CD8-positive, alpha-beta T cell (primary cell): ENCODE measurements at regions of chr11 and their contacts with region 1.

Region 1: GRCh38 chr11:123246749-123247495 is 51.9 kb upstream of the CLMP start:
- DNase-seq: peak; percentile 68 to 88 (median 80)
- ATAC-seq: peak; percentile 86
- H3K4me3 ChIP-seq: no peak overlapping the region
- H3K4me3 Mint-ChIP-seq: peak overlapping the region; percentile 42
- H3K27ac ChIP-seq: no peak overlapping the region
- H3K27ac Mint-ChIP-seq: no peak overlapping the region
- H3K4me1 ChIP-seq: no peaks in the 10 kb centered on the region
- H3K4me1 Mint-ChIP-seq: peaks cover 6% of the 10 kb centered on the region
- H3K27me3 ChIP-seq: no peaks in the 10 kb centered on the region
- H3K27me3 Mint-ChIP-seq: peaks cover 12% of the 10 kb centered on the region
- CTCF ChIP-seq: peak; percentile 94

Region 2: DNA sequence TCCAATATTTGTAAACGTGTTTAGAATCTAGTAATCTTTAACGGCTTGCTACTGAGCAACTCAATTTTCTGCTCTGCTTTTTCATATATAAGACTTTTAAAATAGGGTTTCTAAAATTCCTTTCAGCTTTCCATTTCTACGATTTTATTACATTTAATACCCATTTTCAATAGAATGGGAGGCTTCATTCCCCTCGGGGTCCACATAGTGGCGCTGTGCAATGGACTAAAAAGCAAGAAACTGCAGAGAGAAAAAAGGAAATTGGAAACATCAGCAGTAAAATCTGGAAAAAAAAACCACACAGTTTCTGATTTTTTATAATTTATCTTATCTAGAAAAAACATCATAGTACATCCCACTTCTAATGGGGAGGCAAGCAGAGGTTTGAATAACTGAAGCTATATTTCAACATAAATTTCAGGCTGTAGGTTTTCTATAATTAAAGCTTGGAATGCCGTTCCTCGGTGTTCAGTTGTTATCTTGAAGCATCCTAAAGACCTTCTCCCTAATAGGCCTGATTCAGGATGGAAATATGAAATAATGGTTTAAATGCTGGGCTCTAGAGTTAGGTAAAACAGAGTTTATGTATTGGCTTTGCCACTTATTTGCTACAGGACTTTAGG is 383.1 kb before region 1 on chr11:
- CTCF ChIA-PET with region 1: interaction called, 6 read pairs
- POLR2A ChIA-PET with region 1: no interaction called
- intact Hi-C with region 1: loop called (anchors 1 to 5 kb)
- DNase-seq: peak in 6 of 9 experiments; percentile 10 to 56 (median 38)
- ATAC-seq: no peak
- H3K4me3 ChIP-seq: no peak overlapping the region
- H3K4me3 Mint-ChIP-seq: no peak overlapping the region
- H3K27ac ChIP-seq: no peak overlapping the region
- H3K27ac Mint-ChIP-seq: no peak overlapping the region
- H3K4me1 ChIP-seq: no peaks in the 10 kb centered on the region
- H3K4me1 Mint-ChIP-seq: peaks cover 12% of the 10 kb centered on the region
- H3K27me3 ChIP-seq: no peaks in the 10 kb centered on the region
- H3K27me3 Mint-ChIP-seq: no peaks in the 10 kb centered on the region
- CTCF ChIP-seq: peak; percentile 83

Region 3: GRCh38 chr11:123103326-123103980 is 143.5 kb before region 1 on chr11:
- CTCF ChIA-PET with region 1: interaction called, 121 read pairs
- POLR2A ChIA-PET with region 1: interaction called, 3 read pairs
- intact Hi-C with region 1: loop called in 1 of 2 experiments (anchors 2 kb)
- DNase-seq: peak in 7 of 9 experiments; percentile 16 to 68 (median 38)
- ATAC-seq: peak; percentile 66
- H3K4me3 ChIP-seq: no peak overlapping the region
- H3K4me3 Mint-ChIP-seq: no peak overlapping the region
- H3K27ac ChIP-seq: no peak overlapping the region
- H3K27ac Mint-ChIP-seq: no peak overlapping the region
- H3K4me1 ChIP-seq: peaks cover 14% of the 10 kb centered on the region
- H3K4me1 Mint-ChIP-seq: peaks cover 27% of the 10 kb centered on the region
- H3K27me3 ChIP-seq: no peaks in the 10 kb centered on the region
- H3K27me3 Mint-ChIP-seq: no peaks in the 10 kb centered on the region
- CTCF ChIP-seq: peak; percentile 58

Region 4: GRCh38 chr11:123122341-123122740 is 124.6 kb before region 1 on chr11:
- CTCF ChIA-PET with region 1: interaction called, 13 read pairs
- POLR2A ChIA-PET with region 1: no interaction called
- intact Hi-C with region 1: no loop called
- DNase-seq: no peak
- ATAC-seq: no peak
- H3K4me3 ChIP-seq: no peak overlapping the region
- H3K4me3 Mint-ChIP-seq: no peak overlapping the region
- H3K27ac ChIP-seq: no peak overlapping the region
- H3K27ac Mint-ChIP-seq: no peak overlapping the region
- H3K4me1 ChIP-seq: no peaks in the 10 kb centered on the region
- H3K4me1 Mint-ChIP-seq: no peaks in the 10 kb centered on the region
- H3K27me3 ChIP-seq: peaks cover 0 to 2% of the 10 kb centered on the region in 2 experiments
- H3K27me3 Mint-ChIP-seq: peaks cover 11% of the 10 kb centered on the region
- CTCF ChIP-seq: no peak

Region 5: GRCh38 chr11:123261345-123262106 is 14.6 kb after region 1 on chr11:
- CTCF ChIA-PET with region 1: interaction called, 20 read pairs
- POLR2A ChIA-PET with region 1: no interaction called
- intact Hi-C with region 1: no loop called
- DNase-seq: peak; percentile 16 to 70 (median 61)
- ATAC-seq: peak; percentile 75
- H3K4me3 ChIP-seq: no peak overlapping the region
- H3K4me3 Mint-ChIP-seq: peak overlapping the region; percentile 43
- H3K27ac ChIP-seq: no peak overlapping the region
- H3K27ac Mint-ChIP-seq: no peak overlapping the region
- H3K4me1 ChIP-seq: peaks cover 4% of the 10 kb centered on the region
- H3K4me1 Mint-ChIP-seq: peaks cover 5% of the 10 kb centered on the region
- H3K27me3 ChIP-seq: peaks cover 0 to 2% of the 10 kb centered on the region in 2 experiments
- H3K27me3 Mint-ChIP-seq: peaks cover 23% of the 10 kb centered on the region
- CTCF ChIP-seq: peak; percentile 63